Transverse colon (tissue), 4 donors: ENCODE measurements at regions of chr4 and their contacts with region 1.

Region 1: GRCh38 chr4:69126024-69126423 is 29.8 kb downstream of the UGT2B7 start:
- DNase-seq: no peak
- H3K4me3 ChIP-seq: no peak overlapping the region
- H3K27ac ChIP-seq: no peak overlapping the region
- H3K4me1 ChIP-seq: no peaks in the 10 kb centered on the region
- H3K27me3 ChIP-seq: no peaks in the 10 kb centered on the region
- CTCF ChIP-seq: no peak
- EP300 ChIP-seq: no peak
- POLR2A ChIP-seq: no peak

Region 2: GRCh38 chr4:68883870-68884269 is 242.2 kb before region 1 on chr4:
- in situ Hi-C with region 1: no loop called
- intact Hi-C with region 1: loop called (anchors 10 kb)
- DNase-seq: no peak
- H3K4me3 ChIP-seq: no peak overlapping the region
- H3K27ac ChIP-seq: no peak overlapping the region
- H3K4me1 ChIP-seq: peaks cover 0 to 5% (median 1%) of the 10 kb centered on the region in 4 donors
- H3K27me3 ChIP-seq: no peaks in the 10 kb centered on the region
- CTCF ChIP-seq: no peak
- EP300 ChIP-seq: no peak
- POLR2A ChIP-seq: no peak

Region 3: DNA sequence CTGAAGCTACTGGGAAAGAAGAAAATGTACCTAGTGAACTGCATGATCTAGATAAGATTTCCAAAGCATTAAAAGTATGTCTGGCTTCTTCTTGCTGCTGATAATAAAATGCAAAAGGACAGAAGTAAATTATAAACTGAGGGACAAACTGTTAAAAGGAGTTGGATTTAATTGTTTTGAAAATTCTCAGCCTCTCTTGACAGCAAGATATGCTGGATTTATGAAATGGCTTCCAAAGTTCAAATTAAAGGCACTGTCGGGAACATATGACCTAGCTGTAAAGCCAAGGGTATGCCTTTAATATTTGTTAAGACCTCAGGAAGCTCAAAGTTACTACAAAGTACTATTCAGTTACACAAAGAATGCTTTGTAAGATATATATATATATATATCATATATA is 1162.6 kb after region 1 on chr4:
- in situ Hi-C with region 1: no loop called
- intact Hi-C with region 1: no loop called
- DNase-seq: no peak
- H3K4me3 ChIP-seq: no peak overlapping the region
- H3K27ac ChIP-seq: no peak overlapping the region
- H3K4me1 ChIP-seq: no peaks in the 10 kb centered on the region
- H3K27me3 ChIP-seq: no peaks in the 10 kb centered on the region
- CTCF ChIP-seq: no peak
- EP300 ChIP-seq: no peak
- POLR2A ChIP-seq: no peak